ENCODE measurements at regions of chr1 and their contacts with region 1.

Region 1: GRCh38 chr1:119711804-119712341 is at the start of gene PHGDH:
- DNase-seq: peak; percentile 78 to 89
- H3K4me3 ChIP-seq: peak within 1 kb of the TSS; percentile 93
- H3K27ac ChIP-seq: peak within 1 kb of the TSS; percentile 85
- H3K4me1 ChIP-seq: peaks cover 34% of the 10 kb centered on the region
- H3K27me3 ChIP-seq: no peaks in the 10 kb centered on the region
- CTCF ChIP-seq: no peak
- total RNA-seq, gene PHGDH: 373 and 569 TPM in 2 replicates

Region 2: DNA sequence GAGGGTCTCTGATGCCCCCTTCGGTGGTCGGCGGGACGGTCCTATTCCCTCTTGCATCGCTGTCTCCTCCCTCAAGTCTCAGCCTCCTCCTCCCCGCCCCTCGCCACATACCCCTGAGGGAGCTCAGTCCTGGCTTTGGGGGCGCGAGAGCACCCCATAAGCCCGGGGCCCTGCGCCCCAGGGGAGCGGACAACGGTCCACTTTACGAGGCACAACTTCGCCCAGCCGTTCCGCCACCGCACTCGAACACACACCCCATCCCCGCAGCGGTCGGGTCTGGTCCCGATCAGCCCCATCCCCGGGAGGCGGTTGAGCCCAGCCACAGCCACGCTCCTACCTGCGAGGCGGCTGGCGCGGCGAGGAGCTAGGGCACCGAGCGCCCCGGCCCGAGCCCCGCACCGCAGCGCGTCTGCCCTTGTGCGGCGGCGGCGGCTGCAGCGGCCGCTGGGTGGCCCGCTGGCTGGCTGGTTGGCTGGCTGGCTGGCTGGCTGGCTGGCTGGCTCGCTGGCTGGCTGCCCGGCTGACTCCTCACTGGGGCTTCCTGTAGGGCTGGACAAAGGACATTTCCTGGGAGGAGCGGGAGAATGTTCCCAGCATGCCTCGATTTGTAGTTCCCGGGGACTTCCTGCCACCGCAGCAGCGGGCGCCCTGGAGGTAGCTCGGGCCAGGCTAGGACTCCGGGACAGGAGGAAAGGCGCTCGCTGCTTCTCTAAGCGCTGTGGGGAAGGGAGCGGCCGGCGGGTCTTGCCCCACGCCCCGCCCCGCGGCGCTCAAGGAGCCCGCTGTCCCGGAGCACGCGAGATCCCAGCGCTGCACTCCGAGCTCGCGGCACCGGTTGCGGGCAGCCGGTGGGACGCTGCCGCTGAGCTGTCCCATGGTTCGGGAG is 63.9 kb before region 1 on chr1 and contains the start of gene ZNF697:
- CTCF ChIA-PET with region 1: no interaction called
- POLR2A ChIA-PET with region 1: interaction called, 6 read pairs
- intact Hi-C with region 1: loop called (anchors 1 kb)
- DNase-seq: peak; percentile 97 to 98
- H3K4me3 ChIP-seq: peak within 1 kb of the TSS; percentile 99
- H3K27ac ChIP-seq: peak within 1 kb of the TSS; percentile 43
- H3K4me1 ChIP-seq: peaks cover 26% of the 10 kb centered on the region
- H3K27me3 ChIP-seq: no peaks in the 10 kb centered on the region
- CTCF ChIP-seq: peak; percentile 45; the same call in 1 of the 2 replicates
- total RNA-seq, gene ZNF697: 3.6 and 4.1 TPM in 2 replicates

Region 3: GRCh38 chr1:119686649-119687048 is 25.2 kb before region 1 on chr1:
- CTCF ChIA-PET with region 1: no interaction called
- POLR2A ChIA-PET with region 1: interaction called, 5 read pairs
- intact Hi-C with region 1: loop called (anchors 2 kb)
- DNase-seq: peak; percentile 70 to 99
- H3K4me3 ChIP-seq: peak overlapping the region; percentile 17; the same call in 1 of the 2 replicates
- H3K27ac ChIP-seq: peak overlapping the region; percentile 82
- H3K4me1 ChIP-seq: peaks cover 47% of the 10 kb centered on the region
- H3K27me3 ChIP-seq: no peaks in the 10 kb centered on the region
- CTCF ChIP-seq: no peak

Region 4: GRCh38 chr1:119700326-119700725 is 11.5 kb before region 1 on chr1:
- CTCF ChIA-PET with region 1: no interaction called
- POLR2A ChIA-PET with region 1: interaction called, 13 read pairs
- intact Hi-C with region 1: no loop called
- DNase-seq: peak in 1 of 2 experiments; percentile 32
- H3K4me3 ChIP-seq: no peak overlapping the region
- H3K27ac ChIP-seq: no peak overlapping the region
- H3K4me1 ChIP-seq: no peaks in the 10 kb centered on the region
- H3K27me3 ChIP-seq: no peaks in the 10 kb centered on the region
- CTCF ChIP-seq: no peak

Region 5: DNA sequence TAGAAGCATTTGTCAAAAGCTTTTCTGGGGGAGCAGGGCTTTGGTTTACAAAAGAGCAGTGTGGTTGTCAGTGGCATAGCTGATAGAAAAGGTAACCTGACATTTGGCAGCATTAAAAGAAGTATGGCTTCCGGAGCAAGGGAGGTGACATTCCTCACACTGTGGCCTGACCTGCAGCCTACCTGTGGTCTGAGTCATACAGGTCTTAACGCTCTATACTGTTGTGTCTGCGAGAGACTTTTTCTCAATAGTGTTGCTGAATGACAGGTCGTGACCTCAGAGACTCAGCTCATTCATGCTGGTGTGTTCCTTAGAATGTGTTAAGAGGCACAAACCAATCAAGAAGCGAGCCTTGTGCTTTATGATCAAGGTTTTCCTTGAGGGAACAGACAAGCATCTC is 19.2 kb after region 1 on chr1:
- CTCF ChIA-PET with region 1: interaction called, 4 read pairs
- POLR2A ChIA-PET with region 1: no interaction called
- intact Hi-C with region 1: loop called (anchors 1 kb)
- DNase-seq: peak; percentile 78 to 99
- H3K4me3 ChIP-seq: no peak overlapping the region
- H3K27ac ChIP-seq: peak overlapping the region; percentile 37
- H3K4me1 ChIP-seq: peaks cover 50% of the 10 kb centered on the region
- H3K27me3 ChIP-seq: no peaks in the 10 kb centered on the region
- CTCF ChIP-seq: no peak